Lower leg skin (tissue), 4 donors: ENCODE measurements at regions of chr13 and their contacts with region 1.

Region 1: GRCh38 chr13:77492982-77493381 is 42.5 kb upstream of the SCEL start:
- DNase-seq: no peak
- H3K4me3 ChIP-seq: no peak overlapping the region
- CTCF ChIP-seq: no peak
- POLR2A ChIP-seq: no peak

Region 2: GRCh38 chr13:77565635-77566034 is 72.7 kb after region 1 on chr13:
- intact Hi-C with region 1: loop called (anchors 2 kb)
- DNase-seq: no peak
- H3K4me3 ChIP-seq: no peak overlapping the region
- CTCF ChIP-seq: no peak
- POLR2A ChIP-seq: no peak